Activated CD8-positive, alpha-beta T cell treated with anti-CD3 and anti-CD28 coated beads for 36 hours (primary cell): ENCODE measurements at regions of chr12 and their contacts with region 1.

Region 1: DNA sequence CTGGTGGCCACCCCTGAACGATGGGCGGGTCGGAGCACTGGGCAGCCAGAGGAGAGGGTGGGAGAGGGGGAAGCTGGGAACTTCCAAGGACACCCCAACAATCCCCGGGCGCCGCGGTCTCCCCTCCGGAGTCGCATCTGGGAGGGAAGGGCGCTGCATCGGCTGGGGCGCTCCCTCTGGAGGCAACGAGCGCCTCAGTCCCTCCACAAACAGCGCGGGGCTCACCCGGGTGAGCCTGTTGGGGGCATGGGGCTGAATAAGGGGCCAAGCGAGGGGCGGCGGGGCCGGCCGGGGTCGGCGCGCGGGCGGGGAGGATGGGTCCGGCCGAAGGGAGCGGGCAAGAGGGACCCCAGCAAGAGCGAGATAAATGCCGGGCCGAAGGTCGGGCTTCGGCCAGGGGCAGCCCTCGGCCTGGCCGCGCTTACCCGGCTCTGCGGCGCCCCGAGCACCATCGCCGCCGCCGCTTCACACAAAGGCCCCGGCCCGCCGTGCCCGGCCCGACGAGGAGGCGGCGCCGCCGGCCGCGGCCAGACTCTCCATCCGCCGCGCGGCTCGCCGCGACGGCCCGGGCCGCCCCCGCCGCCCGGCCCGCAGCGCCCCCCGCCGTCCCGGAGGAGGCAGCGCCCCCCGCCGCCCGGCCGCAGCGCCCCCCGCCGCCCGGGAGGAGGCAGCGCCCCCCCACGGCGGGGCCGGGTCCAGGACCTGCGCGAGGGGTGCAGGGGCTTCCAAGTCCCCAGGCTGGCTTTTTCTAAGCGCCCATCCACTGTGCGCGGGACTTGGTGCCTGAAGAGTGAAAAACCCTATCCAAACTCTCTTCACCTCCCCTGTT is at the start of gene ZBTB39:
- DNase-seq: peak; percentile 65
- ATAC-seq: peak; percentile 83
- H3K4me3 Mint-ChIP-seq: peak within 1 kb of the TSS; percentile 83
- H3K27ac Mint-ChIP-seq: peak within 1 kb of the TSS; percentile 80
- H3K4me1 Mint-ChIP-seq: peaks cover 45% of the 10 kb centered on the region
- H3K27me3 Mint-ChIP-seq: no peaks in the 10 kb centered on the region
- CTCF ChIP-seq: peak; percentile 34
- total RNA-seq, gene ZBTB39: 5.1 to 5.5 TPM

Region 2: DNA sequence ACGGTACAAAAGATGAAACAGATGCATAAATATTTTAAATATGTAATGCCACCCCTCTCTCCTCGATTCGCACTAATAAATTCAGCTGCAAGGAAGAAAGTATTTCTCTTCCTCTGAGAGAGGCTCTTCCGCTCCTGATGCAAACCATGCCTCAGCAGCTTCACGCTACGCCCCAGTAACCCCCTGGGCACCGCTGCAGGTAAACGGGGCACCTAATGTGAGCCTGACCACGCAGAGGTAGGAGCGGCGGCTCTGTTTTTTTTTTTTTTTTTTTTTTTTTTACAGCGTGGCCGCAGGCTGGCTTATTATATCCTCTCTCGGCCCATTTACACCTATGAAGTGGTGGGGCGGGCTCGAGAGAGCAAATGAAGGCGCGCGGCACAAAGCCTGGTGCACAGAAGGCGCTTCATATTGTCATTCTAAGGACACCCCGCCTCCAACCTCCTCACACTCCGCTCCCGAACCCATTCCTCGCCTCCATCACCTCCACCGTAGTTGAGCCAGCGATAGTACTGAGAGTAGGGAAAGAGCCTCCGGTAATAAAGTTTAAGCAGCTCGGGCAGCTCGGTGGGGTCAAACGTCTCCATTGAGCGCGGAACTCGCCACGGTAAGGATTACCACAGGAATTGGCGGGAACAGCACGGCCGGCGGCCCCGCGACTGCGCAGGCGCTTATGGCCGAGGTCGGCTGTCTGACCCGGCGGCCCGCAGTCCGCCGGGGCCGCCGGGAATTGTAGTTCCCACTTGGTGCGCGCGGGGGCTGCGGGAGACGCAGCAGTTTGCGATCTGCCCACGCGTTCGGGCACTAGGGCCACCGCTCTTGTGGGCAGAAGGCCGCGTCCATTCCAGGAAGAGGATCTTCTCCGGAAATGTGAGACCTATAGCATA is 254.2 kb before region 1 on chr12 and contains the start of gene PRIM1:
- CTCF ChIA-PET with region 1: interaction called, 34 read pairs
- POLR2A ChIA-PET with region 1: interaction called, 4 read pairs
- intact Hi-C with region 1: no loop called
- DNase-seq: peak; percentile 94
- ATAC-seq: peak; percentile 93
- H3K4me3 Mint-ChIP-seq: peak within 1 kb of the TSS; percentile 95
- H3K27ac Mint-ChIP-seq: peak within 1 kb of the TSS; percentile 99
- H3K4me1 Mint-ChIP-seq: peaks cover 32% of the 10 kb centered on the region
- H3K27me3 Mint-ChIP-seq: no peaks in the 10 kb centered on the region
- CTCF ChIP-seq: no peak
- total RNA-seq, gene PRIM1: 80.3 to 86.7 TPM

Region 3: GRCh38 chr12:56987551-56988053 is 18.6 kb before region 1 on chr12:
- CTCF ChIA-PET with region 1: interaction called, 78 read pairs
- POLR2A ChIA-PET with region 1: no interaction called
- intact Hi-C with region 1: no loop called
- DNase-seq: peak; percentile 81
- ATAC-seq: peak; percentile 77
- H3K4me3 Mint-ChIP-seq: no peak overlapping the region
- H3K27ac Mint-ChIP-seq: no peak overlapping the region
- H3K4me1 Mint-ChIP-seq: peaks cover 12% of the 10 kb centered on the region
- H3K27me3 Mint-ChIP-seq: peaks cover 1% of the 10 kb centered on the region
- CTCF ChIP-seq: peak; percentile 97

Region 4: GRCh38 chr12:57019983-57020719 is 14.0 kb after region 1 on chr12:
- CTCF ChIA-PET with region 1: interaction called, 21 read pairs
- POLR2A ChIA-PET with region 1: no interaction called
- intact Hi-C with region 1: no loop called
- DNase-seq: no peak
- ATAC-seq: no peak
- H3K4me3 Mint-ChIP-seq: no peak overlapping the region
- H3K27ac Mint-ChIP-seq: peak overlapping the region; percentile 20
- H3K4me1 Mint-ChIP-seq: peaks cover 8% of the 10 kb centered on the region
- H3K27me3 Mint-ChIP-seq: no peaks in the 10 kb centered on the region
- CTCF ChIP-seq: no peak

Region 5: GRCh38 chr12:57046947-57047890 is 41.0 kb after region 1 on chr12:
- CTCF ChIA-PET with region 1: interaction called, 17 read pairs
- POLR2A ChIA-PET with region 1: interaction called, 5 read pairs
- intact Hi-C with region 1: no loop called
- DNase-seq: peak; percentile 85
- ATAC-seq: peak; percentile 89
- H3K4me3 Mint-ChIP-seq: peak overlapping the region; percentile 7
- H3K27ac Mint-ChIP-seq: peak overlapping the region; percentile 86
- H3K4me1 Mint-ChIP-seq: peaks cover 40% of the 10 kb centered on the region
- H3K27me3 Mint-ChIP-seq: no peaks in the 10 kb centered on the region
- CTCF ChIP-seq: no peak

Region 6: DNA sequence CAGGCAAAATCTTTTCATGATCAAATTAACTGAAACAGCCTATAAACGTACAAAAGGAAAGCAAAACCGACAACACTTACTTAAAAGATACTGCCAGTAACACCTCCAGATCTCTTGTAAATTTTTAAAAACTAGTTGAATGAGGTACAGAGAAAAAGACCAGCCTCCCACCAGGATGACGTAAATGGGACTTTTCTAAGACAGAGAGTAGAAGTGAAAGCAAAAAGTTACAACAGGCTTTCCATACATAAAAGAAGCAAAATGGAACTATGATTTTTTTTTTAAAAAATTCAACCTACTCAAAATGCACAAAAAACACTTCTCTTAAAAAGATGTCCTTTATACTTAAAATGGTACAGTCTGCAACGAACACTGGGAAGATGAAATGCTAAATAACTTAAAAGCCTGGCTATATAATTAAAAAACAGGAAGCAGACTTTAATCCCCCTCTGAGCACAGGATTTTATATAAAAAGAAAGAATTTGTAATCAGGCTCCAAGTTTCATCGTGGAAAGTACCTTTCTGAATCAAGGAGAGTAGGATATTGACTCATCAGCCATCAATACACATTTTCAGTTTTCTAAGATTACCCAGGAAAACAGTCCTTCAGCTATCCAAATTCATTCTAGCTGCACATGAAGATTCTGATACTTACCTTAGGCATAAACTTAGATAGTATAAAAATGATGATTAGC is 57.9 kb after region 1 on chr12:
- CTCF ChIA-PET with region 1: interaction called, 21 read pairs
- POLR2A ChIA-PET with region 1: interaction called, 7 read pairs
- intact Hi-C with region 1: loop called (anchors 1 kb)
- DNase-seq: peak; percentile 86
- ATAC-seq: peak; percentile 83
- H3K4me3 Mint-ChIP-seq: peak overlapping the region; percentile 67
- H3K27ac Mint-ChIP-seq: peak overlapping the region; percentile 90
- H3K4me1 Mint-ChIP-seq: peaks cover 63% of the 10 kb centered on the region
- H3K27me3 Mint-ChIP-seq: no peaks in the 10 kb centered on the region
- CTCF ChIP-seq: no peak

Region 7: DNA sequence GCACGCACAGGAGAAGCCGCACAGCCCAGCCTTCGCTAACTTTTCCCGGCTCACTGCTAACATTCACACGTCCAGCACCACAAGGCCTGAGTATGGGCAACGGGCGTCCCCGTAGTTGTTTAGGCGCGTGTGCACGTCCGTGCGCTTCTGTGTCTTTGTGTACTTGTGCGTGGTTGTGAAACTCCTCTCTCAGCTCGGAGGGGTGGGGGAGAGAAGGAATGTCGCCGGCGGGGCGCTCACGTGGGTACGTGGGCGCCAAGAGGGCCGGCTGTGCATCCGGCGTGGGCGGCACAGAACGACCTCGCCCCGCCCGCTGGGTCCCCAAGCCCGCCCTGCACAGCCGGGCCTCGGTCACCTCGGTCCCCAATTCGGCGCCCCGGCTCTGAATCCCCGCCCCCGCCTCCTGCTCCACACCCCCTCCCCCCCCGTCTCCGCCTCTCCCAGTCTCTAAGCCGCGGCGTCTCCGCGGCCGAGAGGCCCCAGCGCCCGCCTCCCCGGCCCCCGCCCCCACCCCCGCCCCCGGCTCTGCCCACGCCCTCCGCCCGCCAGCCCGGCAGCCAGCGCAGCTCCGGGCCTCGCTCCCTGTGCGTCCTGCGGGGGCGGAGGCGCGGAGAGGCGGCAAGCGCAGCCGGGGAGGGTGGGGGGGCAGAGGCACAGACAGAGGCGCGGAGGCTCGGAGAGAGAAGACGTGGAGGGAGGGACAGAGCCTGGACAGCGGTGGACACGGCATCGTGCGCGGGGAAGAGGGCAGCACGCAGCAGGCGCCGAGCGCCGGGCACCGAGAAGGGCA is 82.5 kb after region 1 on chr12 and contains the start of gene NAB2:
- CTCF ChIA-PET with region 1: interaction called, 12 read pairs
- POLR2A ChIA-PET with region 1: no interaction called
- intact Hi-C with region 1: no loop called
- DNase-seq: peak; percentile 93
- ATAC-seq: peak; percentile 45
- H3K4me3 Mint-ChIP-seq: peak within 1 kb of the TSS; percentile 90
- H3K27ac Mint-ChIP-seq: peak within 1 kb of the TSS; percentile 97
- H3K4me1 Mint-ChIP-seq: peaks cover 53% of the 10 kb centered on the region
- H3K27me3 Mint-ChIP-seq: no peaks in the 10 kb centered on the region
- CTCF ChIP-seq: no peak
- total RNA-seq, gene NAB2: 69.3 to 70.8 TPM